CD8-positive, alpha-beta T cell (primary cell): ENCODE measurements at regions of chr1 and their contacts with region 1.

Region 1: GRCh38 chr1:107804134-107804533 is 160.8 kb downstream of the VAV3 start:
- DNase-seq: peak in 1 of 9 experiments; percentile 52
- ATAC-seq: peak; percentile 72
- H3K4me3 ChIP-seq: no peak overlapping the region
- H3K4me3 Mint-ChIP-seq: peak overlapping the region; percentile 6
- H3K27ac ChIP-seq: no peak overlapping the region
- H3K27ac Mint-ChIP-seq: peak overlapping the region; percentile 42
- H3K4me1 ChIP-seq: peaks cover 34% of the 10 kb centered on the region
- H3K4me1 Mint-ChIP-seq: peaks cover 41% of the 10 kb centered on the region
- H3K27me3 ChIP-seq: no peaks in the 10 kb centered on the region
- H3K27me3 Mint-ChIP-seq: no peaks in the 10 kb centered on the region
- CTCF ChIP-seq: no peak

Region 2: DNA sequence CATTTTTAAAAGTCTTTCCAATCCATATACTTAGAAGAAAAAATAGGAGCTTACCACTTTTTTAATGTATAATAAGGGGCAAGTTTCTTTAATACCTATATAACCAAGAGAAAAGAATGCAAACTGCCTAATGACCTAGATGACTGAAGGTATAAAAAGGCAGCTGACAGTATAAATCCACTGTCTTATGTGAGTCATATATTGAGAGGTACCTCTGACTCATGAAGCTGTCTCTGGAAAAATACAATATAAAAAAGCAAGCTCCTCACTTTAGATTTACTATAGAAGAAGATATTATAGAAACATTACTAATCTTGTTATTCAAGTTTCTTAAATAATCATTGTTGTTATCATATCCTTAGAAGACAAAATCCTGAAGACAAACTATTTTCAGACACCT is 16.7 kb after region 1 on chr1:
- CTCF ChIA-PET with region 1: no interaction called
- POLR2A ChIA-PET with region 1: no interaction called
- intact Hi-C with region 1: loop called in 1 of 2 experiments (anchors 2 kb)
- DNase-seq: peak in 2 of 9 experiments; percentile 18 to 36
- ATAC-seq: peak; percentile 68
- H3K4me3 ChIP-seq: no peak overlapping the region
- H3K4me3 Mint-ChIP-seq: no peak overlapping the region
- H3K27ac ChIP-seq: peak overlapping the region in 1 of 2 experiments; percentile 30
- H3K27ac Mint-ChIP-seq: no peak overlapping the region
- H3K4me1 ChIP-seq: peaks cover 11% of the 10 kb centered on the region
- H3K4me1 Mint-ChIP-seq: peaks cover 36% of the 10 kb centered on the region
- H3K27me3 ChIP-seq: no peaks in the 10 kb centered on the region
- H3K27me3 Mint-ChIP-seq: no peaks in the 10 kb centered on the region
- CTCF ChIP-seq: no peak

Region 3: GRCh38 chr1:107840725-107841124 is 36.6 kb after region 1 on chr1:
- CTCF ChIA-PET with region 1: no interaction called
- POLR2A ChIA-PET with region 1: no interaction called
- intact Hi-C with region 1: loop called in 1 of 2 experiments (anchors 5 kb)
- DNase-seq: peak in 2 of 9 experiments; percentile 37 to 63
- ATAC-seq: peak; percentile 50
- H3K4me3 ChIP-seq: peak overlapping the region; percentile 2 to 6
- H3K4me3 Mint-ChIP-seq: peak overlapping the region; percentile 42
- H3K27ac ChIP-seq: peak overlapping the region in 1 of 2 experiments; percentile 73
- H3K27ac Mint-ChIP-seq: peak overlapping the region; percentile 81
- H3K4me1 ChIP-seq: peaks cover 64% of the 10 kb centered on the region
- H3K4me1 Mint-ChIP-seq: peaks cover 87% of the 10 kb centered on the region
- H3K27me3 ChIP-seq: no peaks in the 10 kb centered on the region
- H3K27me3 Mint-ChIP-seq: no peaks in the 10 kb centered on the region
- CTCF ChIP-seq: no peak